HEK293 (cell line): ENCODE measurements at regions of chr6 and their contacts with region 1.

Region 1: DNA sequence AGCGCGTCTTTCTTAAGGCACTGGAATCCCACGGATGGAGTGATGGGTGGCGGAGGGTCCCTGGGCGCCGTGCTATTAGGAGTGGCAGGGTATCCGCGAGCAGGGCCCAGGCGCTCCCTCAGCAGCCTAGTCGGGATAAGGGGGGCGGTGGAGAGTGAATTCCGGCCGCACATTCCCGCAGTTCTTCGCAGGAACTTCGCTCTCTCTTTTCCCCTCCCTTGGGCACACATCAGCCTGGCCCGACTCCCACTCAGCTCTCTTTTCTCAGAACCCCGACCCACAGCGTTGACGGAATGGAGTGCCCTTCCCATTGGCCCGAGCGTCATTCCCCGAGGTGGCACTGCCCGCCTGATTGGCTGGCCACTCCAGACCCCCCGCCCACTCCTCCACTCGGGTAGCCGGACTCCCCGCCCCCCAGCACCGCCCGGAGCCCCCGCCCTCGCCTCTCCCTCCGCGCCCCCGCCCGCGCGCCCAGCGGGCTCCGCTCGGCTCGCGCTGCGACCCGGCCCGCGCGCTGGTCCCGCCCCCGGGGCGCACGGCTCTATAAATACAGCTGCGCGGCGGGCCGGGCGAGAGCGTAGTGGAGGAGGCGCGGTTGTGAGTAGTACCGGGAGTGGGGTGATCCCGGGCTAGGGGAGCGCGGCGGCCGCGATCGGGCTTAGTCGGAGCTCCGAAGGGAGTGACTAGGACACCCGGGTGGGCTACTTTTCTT is at the start of gene ID4:
- H3K4me3 ChIP-seq: peak within 1 kb of the TSS; percentile 94
- H3K27ac ChIP-seq: peak within 1 kb of the TSS; percentile 99
- H3K4me1 ChIP-seq: peaks cover 20% of the 10 kb centered on the region
- CTCF ChIP-seq: no peak

Region 2: DNA sequence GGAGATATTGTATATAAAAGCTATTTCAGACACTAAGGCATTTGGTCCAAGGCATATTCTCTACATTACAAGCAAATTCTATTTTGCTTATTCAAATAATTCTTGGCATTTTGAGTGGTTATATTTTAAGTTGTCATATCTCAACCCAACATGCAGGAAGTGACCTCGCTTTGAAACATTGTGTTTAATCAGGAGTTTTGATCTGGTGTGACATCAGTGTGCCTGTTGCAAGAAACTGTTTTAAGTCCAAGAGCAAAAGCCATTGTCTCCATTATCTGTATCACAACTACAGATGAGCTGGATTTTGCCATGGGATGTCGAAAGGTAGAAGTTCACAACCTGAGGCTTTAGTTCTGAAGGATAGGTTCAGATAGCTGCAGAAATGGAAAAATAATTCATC is 509.7 kb before region 1 on chr6:
- CTCF ChIA-PET with region 1: interaction called, 3 read pairs
- POLR2A ChIA-PET with region 1: interaction called, 17 read pairs
- H3K4me3 ChIP-seq: no peak overlapping the region
- H3K27ac ChIP-seq: peak overlapping the region; percentile 24; the same call in 1 of the 2 replicates
- H3K4me1 ChIP-seq: peaks cover 26% of the 10 kb centered on the region
- CTCF ChIP-seq: no peak

Region 3: GRCh38 chr6:19465760-19466159 is 371.2 kb before region 1 on chr6:
- CTCF ChIA-PET with region 1: no interaction called
- POLR2A ChIA-PET with region 1: interaction called, 15 read pairs
- H3K4me3 ChIP-seq: no peak overlapping the region
- H3K27ac ChIP-seq: peak overlapping the region; percentile 83
- H3K4me1 ChIP-seq: peaks cover 10% of the 10 kb centered on the region
- CTCF ChIP-seq: no peak

Region 4: GRCh38 chr6:19804205-19805123 is 32.5 kb before region 1 on chr6:
- CTCF ChIA-PET with region 1: interaction called, 7 read pairs
- POLR2A ChIA-PET with region 1: interaction called, 148 read pairs
- H3K4me3 ChIP-seq: peak overlapping the region; percentile 53
- H3K27ac ChIP-seq: peak overlapping the region; percentile 84
- H3K4me1 ChIP-seq: peaks cover 4% of the 10 kb centered on the region; the same call in 1 of the 2 replicates
- CTCF ChIP-seq: no peak

Region 5: GRCh38 chr6:19818805-19819204 is 18.1 kb before region 1 on chr6:
- CTCF ChIA-PET with region 1: interaction called, 5 read pairs
- POLR2A ChIA-PET with region 1: interaction called, 21 read pairs
- H3K4me3 ChIP-seq: no peak overlapping the region
- H3K27ac ChIP-seq: no peak overlapping the region
- H3K4me1 ChIP-seq: no peaks in the 10 kb centered on the region
- CTCF ChIP-seq: no peak

Region 6: GRCh38 chr6:19824058-19824807 is 12.7 kb before region 1 on chr6:
- CTCF ChIA-PET with region 1: interaction called, 3 read pairs
- POLR2A ChIA-PET with region 1: interaction called, 21 read pairs
- H3K4me3 ChIP-seq: no peak overlapping the region
- H3K27ac ChIP-seq: no peak overlapping the region
- H3K4me1 ChIP-seq: no peaks in the 10 kb centered on the region
- CTCF ChIP-seq: no peak

Region 7: GRCh38 chr6:19851241-19852089 is 14.5 kb after region 1 on chr6:
- CTCF ChIA-PET with region 1: interaction called, 12 read pairs
- POLR2A ChIA-PET with region 1: interaction called, 73 read pairs
- H3K4me3 ChIP-seq: no peak overlapping the region
- H3K27ac ChIP-seq: peak overlapping the region; percentile 54; the same call in 1 of the 2 replicates
- H3K4me1 ChIP-seq: peaks cover 13% of the 10 kb centered on the region
- CTCF ChIP-seq: peak; percentile 65